ENCODE measurements at regions of chr20 and their contacts with region 1.

Region 1: DNA sequence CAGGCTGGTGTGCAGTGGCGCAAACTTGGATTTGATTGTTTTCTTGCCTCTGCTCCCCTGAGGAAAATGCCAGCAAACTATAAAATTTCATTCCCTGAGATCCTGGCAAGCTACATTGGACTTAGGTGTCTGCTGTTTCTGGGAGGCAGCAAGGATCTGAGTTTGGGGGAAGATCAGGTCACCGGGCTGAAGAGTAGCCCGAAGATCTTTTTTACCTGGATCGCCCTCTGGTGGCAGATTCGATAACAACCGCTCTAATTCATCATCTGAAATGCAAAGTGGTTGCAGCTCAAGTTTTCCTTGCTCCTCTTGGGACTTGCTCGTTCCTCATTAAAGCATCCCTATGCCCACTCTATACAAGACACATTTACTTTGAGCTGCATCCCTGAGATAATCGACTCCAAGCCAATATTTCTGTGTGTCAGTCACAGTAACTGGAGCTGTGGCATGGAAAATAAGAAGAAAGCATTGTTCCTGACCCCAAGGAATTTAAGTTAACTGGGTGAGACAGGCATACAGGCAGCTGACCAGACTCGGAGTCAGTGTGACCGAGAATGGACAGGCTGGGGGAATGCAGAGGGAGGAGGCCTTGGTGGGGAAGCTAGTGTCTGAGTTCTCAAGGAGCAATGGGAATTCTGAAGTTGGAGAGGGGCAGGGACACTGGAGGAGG is 131.8 kb upstream of the PROKR2 start:
- DNase-seq: no peak
- ATAC-seq: no peak
- H3K4me3 ChIP-seq: no peak overlapping the region
- H3K27ac ChIP-seq: no peak overlapping the region
- H3K4me1 ChIP-seq: no peaks in the 10 kb centered on the region
- H3K27me3 ChIP-seq: peaks cover 0 to 11% (median 0%) of the 10 kb centered on the region in 9 donors
- CTCF ChIP-seq: peak in 11 of 12 donors; percentile 46 to 73 (median 63)
- POLR2A ChIP-seq: no peak

Region 2: GRCh38 chr20:5205348-5206210 is 243.0 kb before region 1 on chr20:
- intact Hi-C with region 1: loop called in 9 of 10 experiments (anchors 1 to 5 kb)
- DNase-seq: peak; percentile 55 to 77 (median 73)
- ATAC-seq: peak; percentile 59 to 92 (median 88)
- H3K4me3 ChIP-seq: no peak overlapping the region
- H3K27ac ChIP-seq: no peak overlapping the region
- H3K4me1 ChIP-seq: peaks cover 0 to 24% (median 0%) of the 10 kb centered on the region in 12 donors
- H3K27me3 ChIP-seq: no peaks in the 10 kb centered on the region
- CTCF ChIP-seq: peak; percentile 75 to 93 (median 86)
- POLR2A ChIP-seq: no peak

Region 3: GRCh38 chr20:5214826-5215225 is 233.8 kb before region 1 on chr20:
- intact Hi-C with region 1: loop called in 3 of 10 experiments (anchors 5 kb)
- DNase-seq: no peak
- ATAC-seq: no peak
- H3K4me3 ChIP-seq: no peak overlapping the region
- H3K27ac ChIP-seq: no peak overlapping the region
- H3K4me1 ChIP-seq: peaks cover 0 to 27% (median 3%) of the 10 kb centered on the region in 12 donors
- H3K27me3 ChIP-seq: no peaks in the 10 kb centered on the region
- CTCF ChIP-seq: no peak
- POLR2A ChIP-seq: no peak

Region 4: DNA sequence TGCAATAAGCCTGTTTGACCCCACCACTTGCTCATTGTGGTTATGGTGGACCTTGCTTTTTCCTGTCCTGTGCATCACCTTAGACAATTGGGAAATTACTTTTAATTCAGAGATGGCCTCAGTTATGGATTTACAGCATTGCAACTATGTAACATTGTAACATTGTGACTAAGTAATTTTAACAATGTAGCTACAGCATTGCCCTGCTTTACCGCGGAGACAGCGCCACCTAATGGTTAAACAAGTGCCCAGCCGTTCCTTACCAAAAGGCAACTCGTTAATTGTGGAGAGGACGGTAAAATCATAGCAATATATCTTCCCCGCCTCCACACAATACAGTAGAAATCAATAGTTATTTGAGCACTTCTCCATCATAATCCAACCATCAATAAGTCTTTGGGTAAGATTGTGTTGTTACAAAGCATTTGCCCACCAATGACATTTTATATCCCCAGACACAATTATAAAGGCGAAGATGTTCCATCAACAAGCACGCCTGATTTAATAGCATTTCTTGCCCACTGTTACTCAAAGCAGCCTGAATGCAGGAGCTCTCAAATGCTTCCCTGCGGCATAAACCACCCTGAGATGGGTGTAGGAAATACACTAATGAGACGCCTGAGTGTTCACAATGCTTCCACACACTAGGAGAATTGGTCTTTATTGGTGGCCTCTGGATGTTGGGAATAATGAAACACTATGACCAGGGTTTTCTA is 225.5 kb before region 1 on chr20:
- intact Hi-C with region 1: loop called in 2 of 10 experiments (anchors 5 kb)
- DNase-seq: peak in 4 of 5 donors; percentile 30 to 64 (median 52)
- ATAC-seq: peak in 3 of 4 donors; percentile 48 to 68 (median 65)
- H3K4me3 ChIP-seq: no peak overlapping the region
- H3K27ac ChIP-seq: no peak overlapping the region
- H3K4me1 ChIP-seq: peaks cover 0 to 7% (median 0%) of the 10 kb centered on the region in 12 donors
- H3K27me3 ChIP-seq: no peaks in the 10 kb centered on the region
- CTCF ChIP-seq: peak; percentile 67 to 88 (median 84)
- POLR2A ChIP-seq: no peak

Region 5: GRCh38 chr20:5480824-5481600 is 32.4 kb after region 1 on chr20:
- intact Hi-C with region 1: no loop called
- DNase-seq: no peak
- ATAC-seq: no peak
- H3K4me3 ChIP-seq: no peak overlapping the region
- H3K27ac ChIP-seq: no peak overlapping the region
- H3K4me1 ChIP-seq: no peaks in the 10 kb centered on the region
- H3K27me3 ChIP-seq: no peaks in the 10 kb centered on the region
- CTCF ChIP-seq: no peak
- POLR2A ChIP-seq: no peak

Measured in heart left ventricle (tissue), 16 donors.